ENCODE measurements at regions of chr11 and their contacts with region 1.

Region 1: DNA sequence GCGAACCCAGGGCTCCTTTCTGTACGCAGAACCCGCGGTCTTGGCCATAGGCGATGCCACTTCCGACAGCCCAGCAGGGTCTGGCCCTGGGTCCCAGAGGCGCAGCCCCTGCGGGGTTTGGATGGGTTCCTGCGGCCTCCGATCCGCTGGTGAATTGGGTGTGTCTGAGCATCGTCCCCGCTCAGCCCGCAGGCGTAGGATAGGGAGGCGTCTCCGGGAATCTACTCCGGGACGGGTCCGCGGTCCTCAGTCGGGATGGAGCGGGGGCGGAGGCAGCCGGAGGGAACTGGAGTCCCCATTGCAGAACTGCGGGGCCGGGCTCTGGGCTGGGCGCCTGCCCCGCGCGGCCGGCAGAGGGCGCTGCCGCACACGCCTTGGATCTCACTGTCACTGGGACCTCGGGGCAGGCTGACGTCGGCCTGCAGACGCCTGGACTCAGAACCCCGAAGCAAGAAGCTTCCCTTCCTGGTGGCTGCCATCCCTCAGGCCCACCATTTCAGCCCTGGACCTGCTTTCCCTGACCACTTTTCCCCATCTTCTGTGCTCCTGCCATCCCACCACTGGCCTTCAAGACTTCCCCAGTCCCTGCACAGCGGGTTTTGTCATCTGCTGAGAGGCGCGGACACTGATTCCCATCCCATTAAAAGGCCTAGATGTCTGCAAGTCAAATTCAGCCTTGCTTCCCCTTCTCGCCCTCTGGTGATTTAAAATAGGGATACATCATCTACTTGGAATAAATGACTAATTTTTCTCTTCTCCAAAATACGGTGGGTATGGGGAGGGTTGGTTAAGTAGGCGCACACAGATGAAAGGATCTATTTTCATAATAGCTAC is 38.3 kb upstream of the CREB3L1 start:
- DNase-seq: peak; percentile 73
- H3K4me3 ChIP-seq: peak overlapping the region in 1 of 2 donors; percentile 48
- H3K27ac ChIP-seq: peak overlapping the region; percentile 5 to 70
- H3K4me1 ChIP-seq: peaks cover 6% of the 10 kb centered on the region
- H3K27me3 ChIP-seq: no peaks in the 10 kb centered on the region
- CTCF ChIP-seq: peak; percentile 97 to 98 (median 98)
- POLR2A ChIP-seq: no peak

Region 2: DNA sequence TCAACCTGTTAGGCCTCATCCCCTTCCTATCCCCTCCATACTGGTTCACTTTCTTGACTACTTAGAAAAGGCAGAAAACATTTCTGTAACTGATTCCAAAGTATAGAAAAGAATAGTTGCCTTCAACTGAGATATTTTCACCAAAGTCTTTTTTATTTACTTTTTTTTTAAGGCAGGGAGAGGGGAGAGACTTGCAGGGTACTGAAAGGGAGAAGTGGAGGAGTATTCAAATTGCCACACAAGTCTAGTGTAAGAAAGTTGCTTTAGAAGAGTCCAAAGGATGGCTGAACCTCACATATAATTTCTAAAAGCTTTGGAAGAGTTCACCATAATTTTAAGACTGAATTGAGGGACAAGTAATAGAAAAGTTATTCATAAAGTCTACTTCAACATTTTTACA is 124.2 kb before region 1 on chr11:
- intact Hi-C with region 1: loop called (anchors 2 kb)
- DNase-seq: no peak
- H3K4me3 ChIP-seq: no peak overlapping the region
- H3K27ac ChIP-seq: peak overlapping the region in 1 of 2 donors; percentile 31
- H3K4me1 ChIP-seq: no peaks in the 10 kb centered on the region
- H3K27me3 ChIP-seq: no peaks in the 10 kb centered on the region
- CTCF ChIP-seq: no peak
- POLR2A ChIP-seq: no peak

Region 3: DNA sequence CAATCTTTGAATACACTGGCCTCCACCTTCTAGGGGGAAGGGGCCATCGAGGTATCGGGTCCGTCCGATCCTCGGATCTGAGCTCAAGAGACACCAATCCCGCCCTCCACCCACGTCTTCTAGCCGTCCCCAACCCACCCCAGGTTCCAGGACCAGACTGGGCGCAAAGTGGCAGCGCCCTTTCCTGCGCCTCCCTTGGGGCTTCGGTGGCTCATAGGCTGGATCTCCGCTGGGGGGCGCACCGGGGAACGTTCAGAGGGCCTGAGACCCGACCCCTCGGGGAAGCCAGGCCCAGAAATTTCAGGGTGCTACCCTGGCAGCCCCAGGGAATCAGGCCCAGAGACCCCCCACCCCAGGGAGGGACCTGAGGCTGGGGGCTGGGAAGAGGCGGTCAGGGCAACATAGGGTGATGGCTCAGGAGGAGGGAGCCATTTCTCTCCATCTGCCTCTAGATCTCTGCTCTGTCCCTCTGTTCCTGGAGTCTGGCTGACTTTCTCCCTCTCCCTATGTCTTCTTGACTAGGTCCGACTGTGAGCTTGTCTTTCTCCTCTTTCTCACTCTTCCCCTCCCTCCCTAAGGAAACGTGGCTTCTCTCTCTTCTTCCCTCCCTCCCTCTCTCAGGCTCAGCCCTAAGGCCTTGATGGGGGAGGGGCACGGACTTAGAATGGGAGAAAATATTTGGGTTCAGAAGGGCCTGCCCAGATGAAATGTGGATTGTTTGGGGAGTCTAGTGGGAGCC is 39.4 kb after region 1 on chr11:
- intact Hi-C with region 1: loop called (anchors 5 kb)
- DNase-seq: peak; percentile 71
- H3K4me3 ChIP-seq: peak overlapping the region; percentile 67 to 82
- H3K27ac ChIP-seq: peak overlapping the region; percentile 80 to 85
- H3K4me1 ChIP-seq: peaks cover 37% of the 10 kb centered on the region
- H3K27me3 ChIP-seq: no peaks in the 10 kb centered on the region
- CTCF ChIP-seq: peak; percentile 56 to 81 (median 64)
- POLR2A ChIP-seq: no peak

Region 4: DNA sequence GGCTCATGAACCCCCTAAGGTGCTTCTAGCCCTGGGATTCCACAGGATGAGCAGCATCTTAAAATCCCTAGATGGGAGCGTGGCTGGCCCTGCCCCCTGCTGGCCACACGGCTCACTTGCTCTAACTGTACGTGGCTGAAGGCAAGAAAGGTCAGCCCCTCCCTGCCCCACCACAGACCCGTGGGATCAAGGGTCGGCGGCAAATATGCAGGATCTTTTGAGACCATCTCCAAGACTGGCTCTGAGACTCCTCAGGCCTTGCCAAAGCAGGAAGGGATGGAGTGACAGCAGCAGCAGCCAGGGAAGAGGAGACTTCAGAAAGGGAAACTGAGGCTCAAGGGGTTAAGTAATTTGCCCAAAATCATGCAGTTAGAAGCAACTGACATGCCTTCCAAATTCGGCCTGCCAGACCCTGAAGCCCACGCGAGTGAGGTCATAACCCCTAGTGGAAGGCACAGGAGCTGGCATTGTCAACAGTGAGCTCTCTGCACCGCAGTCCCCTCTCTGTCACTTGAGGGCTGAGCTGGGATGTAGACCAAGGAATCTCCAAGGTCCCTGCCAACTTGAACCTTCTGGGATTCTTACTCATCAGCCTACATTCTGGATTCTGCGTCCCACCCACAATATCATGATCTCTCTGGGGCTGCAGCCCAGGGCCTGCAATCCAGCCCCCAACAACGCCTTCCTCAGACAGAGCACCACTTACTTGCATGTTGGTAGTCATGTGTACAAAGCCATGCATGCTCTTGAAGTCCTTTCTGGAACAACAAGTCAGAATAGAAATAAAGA is 69.6 kb after region 1 on chr11:
- intact Hi-C with region 1: loop called (anchors 1 kb)
- DNase-seq: peak; percentile 69
- H3K4me3 ChIP-seq: no peak overlapping the region
- H3K27ac ChIP-seq: no peak overlapping the region
- H3K4me1 ChIP-seq: no peaks in the 10 kb centered on the region
- H3K27me3 ChIP-seq: no peaks in the 10 kb centered on the region
- CTCF ChIP-seq: peak; percentile 83 to 90 (median 86)
- POLR2A ChIP-seq: no peak